Activated CD4-positive, alpha-beta T cell treated with anti-CD3 and anti-CD28 coated beads, Interleukin-2, amount 10 ng/mL, durations not matched to agents 24 days and 14 days (primary cell): ENCODE measurements at regions of chr7 and their contacts with region 1.

Region 1: GRCh38 chr7:140209866-140210609 is 33.3 kb upstream of the KDM7A start:
- DNase-seq: peak; percentile 90
- H3K4me3 Mint-ChIP-seq: peak overlapping the region; percentile 70
- H3K27ac Mint-ChIP-seq: peak overlapping the region; percentile 87
- H3K4me1 Mint-ChIP-seq: peaks cover 74% of the 10 kb centered on the region
- H3K27me3 Mint-ChIP-seq: peaks cover 3% of the 10 kb centered on the region

Region 2: GRCh38 chr7:139673230-139673629 is 536.8 kb before region 1 on chr7:
- intact Hi-C with region 1: loop called (anchors 5 kb)
- DNase-seq: peak; percentile 63
- H3K4me3 Mint-ChIP-seq: no peak overlapping the region
- H3K27ac Mint-ChIP-seq: peak overlapping the region; percentile 76
- H3K4me1 Mint-ChIP-seq: peaks cover 35% of the 10 kb centered on the region
- H3K27me3 Mint-ChIP-seq: no peaks in the 10 kb centered on the region

Region 3: DNA sequence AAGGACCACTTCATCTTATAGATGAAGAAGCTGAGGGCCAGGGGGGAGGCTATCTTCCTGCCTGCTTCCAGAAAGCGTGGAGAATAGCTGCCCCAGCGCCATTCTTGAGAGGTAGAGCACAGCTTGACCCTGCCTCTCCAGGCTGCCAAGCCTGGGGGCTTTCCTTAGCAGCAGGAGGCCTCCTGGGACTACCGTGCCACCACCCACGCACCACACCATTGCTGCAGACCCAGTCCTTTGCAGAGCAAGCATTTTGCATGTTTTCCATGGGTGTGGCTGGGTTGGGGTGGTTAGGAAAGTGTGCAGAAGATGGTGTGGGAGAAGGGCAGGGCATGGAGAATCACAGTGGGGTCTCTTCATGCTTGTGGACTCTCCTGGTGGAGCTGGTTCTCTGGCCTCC is 316.0 kb before region 1 on chr7:
- intact Hi-C with region 1: no loop called
- DNase-seq: no peak
- H3K4me3 Mint-ChIP-seq: no peak overlapping the region
- H3K27ac Mint-ChIP-seq: no peak overlapping the region
- H3K4me1 Mint-ChIP-seq: no peaks in the 10 kb centered on the region
- H3K27me3 Mint-ChIP-seq: peaks cover 5% of the 10 kb centered on the region

Region 4: GRCh38 chr7:140192620-140193019 is 17.4 kb before region 1 on chr7:
- intact Hi-C with region 1: no loop called
- DNase-seq: no peak
- H3K4me3 Mint-ChIP-seq: no peak overlapping the region
- H3K27ac Mint-ChIP-seq: no peak overlapping the region
- H3K4me1 Mint-ChIP-seq: peaks cover 16% of the 10 kb centered on the region
- H3K27me3 Mint-ChIP-seq: peaks cover 6% of the 10 kb centered on the region

Region 5: GRCh38 chr7:140222814-140223213 is 12.8 kb after region 1 on chr7:
- intact Hi-C with region 1: loop called (anchors 1 kb)
- DNase-seq: no peak
- H3K4me3 Mint-ChIP-seq: no peak overlapping the region
- H3K27ac Mint-ChIP-seq: peak overlapping the region; percentile 25
- H3K4me1 Mint-ChIP-seq: peaks cover 45% of the 10 kb centered on the region
- H3K27me3 Mint-ChIP-seq: no peaks in the 10 kb centered on the region

Region 6: DNA sequence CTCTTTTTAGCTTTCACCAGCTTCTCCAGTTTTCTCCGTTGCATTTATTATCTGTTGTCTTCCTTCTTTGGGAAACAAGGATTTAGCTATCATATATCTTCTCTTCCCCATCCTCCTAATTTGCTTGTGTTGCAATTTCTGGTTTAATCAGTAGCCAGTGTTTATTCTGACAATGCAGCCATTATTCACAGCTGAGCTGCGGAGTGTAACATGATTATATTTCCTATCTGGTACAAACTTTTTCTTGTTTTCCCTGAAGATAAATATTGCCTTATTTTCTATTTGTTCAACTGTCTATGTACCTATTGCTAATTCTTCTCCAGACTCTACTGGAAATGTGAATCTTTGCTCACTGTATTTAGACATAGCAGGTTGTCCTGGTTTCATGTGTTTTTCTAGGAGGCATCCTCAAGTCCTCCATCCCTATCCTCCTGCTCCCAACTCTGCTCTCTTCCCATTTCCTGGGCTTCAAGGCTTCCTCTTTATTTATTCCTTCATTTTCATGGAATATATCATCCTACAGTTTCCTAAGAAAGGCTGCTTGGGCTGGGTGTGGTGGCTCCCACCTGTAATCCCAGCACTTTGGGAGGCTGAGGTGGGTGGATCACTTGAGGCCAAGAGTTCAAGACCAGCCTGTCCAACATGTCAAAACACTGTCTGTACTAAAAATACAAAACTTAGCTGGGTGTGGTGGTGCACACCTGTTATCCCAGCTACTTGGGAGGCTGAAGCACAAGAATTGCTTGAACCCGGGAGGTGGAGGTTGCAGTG is 39.2 kb after region 1 on chr7:
- intact Hi-C with region 1: loop called (anchors 1 kb)
- DNase-seq: no peak
- H3K4me3 Mint-ChIP-seq: no peak overlapping the region
- H3K27ac Mint-ChIP-seq: no peak overlapping the region
- H3K4me1 Mint-ChIP-seq: peaks cover 21% of the 10 kb centered on the region
- H3K27me3 Mint-ChIP-seq: no peaks in the 10 kb centered on the region